Activated CD8-positive, alpha-beta T cell treated with anti-CD3 and anti-CD28 coated beads for 36 hours (primary cell): ENCODE measurements at regions of chr4 and their contacts with region 1.

Region 1: GRCh38 chr4:145618932-145619638 is at the start of gene MMAA:
- DNase-seq: peak; percentile 96
- ATAC-seq: peak; percentile 90
- H3K4me3 Mint-ChIP-seq: peak within 1 kb of the TSS; percentile 92
- H3K27ac Mint-ChIP-seq: peak within 1 kb of the TSS; percentile 98
- H3K4me1 Mint-ChIP-seq: peaks cover 44% of the 10 kb centered on the region
- H3K27me3 Mint-ChIP-seq: no peaks in the 10 kb centered on the region
- CTCF ChIP-seq: peak; percentile 40
- total RNA-seq, gene MMAA: 14.4 to 15.9 TPM

Region 2: GRCh38 chr4:145234091-145234706 is 384.9 kb before region 1 on chr4:
- CTCF ChIA-PET with region 1: interaction called, 22 read pairs
- POLR2A ChIA-PET with region 1: no interaction called
- intact Hi-C with region 1: no loop called
- DNase-seq: peak; percentile 79
- ATAC-seq: peak; percentile 98
- H3K4me3 Mint-ChIP-seq: no peak overlapping the region
- H3K27ac Mint-ChIP-seq: no peak overlapping the region
- H3K4me1 Mint-ChIP-seq: no peaks in the 10 kb centered on the region
- H3K27me3 Mint-ChIP-seq: no peaks in the 10 kb centered on the region
- CTCF ChIP-seq: peak; percentile 85

Region 3: GRCh38 chr4:145589916-145590702 is 29.0 kb before region 1 on chr4:
- CTCF ChIA-PET with region 1: no interaction called
- POLR2A ChIA-PET with region 1: no interaction called
- intact Hi-C with region 1: no loop called
- DNase-seq: no peak
- ATAC-seq: no peak
- H3K4me3 Mint-ChIP-seq: no peak overlapping the region
- H3K27ac Mint-ChIP-seq: no peak overlapping the region
- H3K4me1 Mint-ChIP-seq: no peaks in the 10 kb centered on the region
- H3K27me3 Mint-ChIP-seq: peaks cover 17% of the 10 kb centered on the region
- CTCF ChIP-seq: no peak

Region 4: DNA sequence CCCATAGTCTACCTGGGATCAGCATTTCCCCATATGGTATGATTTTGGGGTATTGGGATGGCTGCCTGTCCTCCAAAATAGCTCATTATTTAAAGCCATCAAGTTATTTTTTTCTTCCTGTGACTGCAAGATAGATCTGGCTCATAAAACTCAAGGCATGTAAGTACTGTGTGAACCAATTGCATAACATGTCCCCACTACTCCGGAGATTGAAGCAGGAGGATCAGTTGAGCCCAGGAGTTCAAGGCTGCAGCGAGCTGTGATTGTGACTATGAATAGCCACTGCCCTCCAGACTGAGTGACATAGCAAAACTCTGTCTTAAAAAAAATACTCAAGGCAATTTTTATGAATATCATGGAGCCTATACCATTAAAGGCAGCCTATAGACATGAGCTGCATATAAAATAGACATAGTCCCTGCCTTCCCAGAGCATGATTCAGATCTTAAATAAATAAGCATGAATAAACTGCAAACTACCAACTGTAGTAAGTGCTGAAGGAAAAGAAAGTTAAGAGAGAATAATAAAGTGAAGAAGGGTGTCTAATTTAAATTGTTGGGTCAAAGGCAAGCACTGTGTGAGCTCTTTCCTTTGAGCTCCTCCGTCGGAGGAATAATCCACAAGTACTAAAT is 16.8 kb before region 1 on chr4:
- CTCF ChIA-PET with region 1: interaction called, 12 read pairs
- POLR2A ChIA-PET with region 1: interaction called, 3 read pairs
- intact Hi-C with region 1: no loop called
- DNase-seq: no peak
- ATAC-seq: no peak
- H3K4me3 Mint-ChIP-seq: no peak overlapping the region
- H3K27ac Mint-ChIP-seq: no peak overlapping the region
- H3K4me1 Mint-ChIP-seq: no peaks in the 10 kb centered on the region
- H3K27me3 Mint-ChIP-seq: peaks cover 9% of the 10 kb centered on the region
- CTCF ChIP-seq: no peak

Region 5: GRCh38 chr4:145808021-145808650 is 189.1 kb after region 1 on chr4:
- CTCF ChIA-PET with region 1: interaction called, 5 read pairs
- POLR2A ChIA-PET with region 1: interaction called, 3 read pairs
- intact Hi-C with region 1: loop called (anchors 1 kb)
- DNase-seq: peak; percentile 73
- ATAC-seq: peak; percentile 85
- H3K4me3 Mint-ChIP-seq: peak overlapping the region; percentile 42
- H3K27ac Mint-ChIP-seq: peak overlapping the region; percentile 99
- H3K4me1 Mint-ChIP-seq: peaks cover 64% of the 10 kb centered on the region
- H3K27me3 Mint-ChIP-seq: no peaks in the 10 kb centered on the region
- CTCF ChIP-seq: no peak